ENCODE measurements at regions of chr7 and their contacts with region 1.

Region 1: DNA sequence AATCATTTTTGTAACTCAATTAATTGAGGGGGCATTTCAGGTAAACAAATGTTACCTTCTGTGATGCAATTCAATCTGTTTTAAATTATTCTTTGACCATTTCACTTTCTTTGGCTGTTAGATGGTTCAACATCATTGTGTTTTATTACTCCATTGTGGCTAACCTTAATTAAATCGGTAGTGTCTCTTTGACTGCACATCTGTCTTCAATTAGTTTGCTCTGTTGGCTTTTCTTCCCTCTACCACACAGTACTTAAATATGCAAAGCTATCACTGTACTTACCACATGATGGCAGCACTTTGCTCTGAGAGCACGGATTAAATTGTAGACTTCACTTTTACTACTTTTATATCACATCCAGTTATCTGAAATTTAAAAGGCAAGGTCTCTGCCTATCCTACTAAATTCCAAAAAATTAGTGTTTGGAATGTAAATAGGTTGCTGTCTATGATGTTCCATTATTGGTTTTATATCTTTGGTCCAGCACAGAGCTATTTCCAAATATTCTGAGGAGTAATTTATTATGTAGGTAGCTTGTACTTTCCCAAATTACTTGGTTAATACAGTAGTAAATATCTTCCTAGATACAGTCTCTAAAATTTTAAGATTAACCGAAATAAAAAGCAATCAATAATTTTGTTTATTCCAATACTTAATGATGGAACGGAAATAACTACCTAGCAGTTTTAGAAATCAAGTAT is 352.0 kb downstream of the PCLO start:
- DNase-seq: no peak
- ATAC-seq: peak; percentile 43 to 87 (median 82)
- H3K4me3 ChIP-seq: no peak overlapping the region
- H3K27ac ChIP-seq: no peak overlapping the region
- H3K4me1 ChIP-seq: no peaks in the 10 kb centered on the region
- H3K27me3 ChIP-seq: no peaks in the 10 kb centered on the region
- CTCF ChIP-seq: peak; percentile 40 to 55 (median 48)

Region 2: DNA sequence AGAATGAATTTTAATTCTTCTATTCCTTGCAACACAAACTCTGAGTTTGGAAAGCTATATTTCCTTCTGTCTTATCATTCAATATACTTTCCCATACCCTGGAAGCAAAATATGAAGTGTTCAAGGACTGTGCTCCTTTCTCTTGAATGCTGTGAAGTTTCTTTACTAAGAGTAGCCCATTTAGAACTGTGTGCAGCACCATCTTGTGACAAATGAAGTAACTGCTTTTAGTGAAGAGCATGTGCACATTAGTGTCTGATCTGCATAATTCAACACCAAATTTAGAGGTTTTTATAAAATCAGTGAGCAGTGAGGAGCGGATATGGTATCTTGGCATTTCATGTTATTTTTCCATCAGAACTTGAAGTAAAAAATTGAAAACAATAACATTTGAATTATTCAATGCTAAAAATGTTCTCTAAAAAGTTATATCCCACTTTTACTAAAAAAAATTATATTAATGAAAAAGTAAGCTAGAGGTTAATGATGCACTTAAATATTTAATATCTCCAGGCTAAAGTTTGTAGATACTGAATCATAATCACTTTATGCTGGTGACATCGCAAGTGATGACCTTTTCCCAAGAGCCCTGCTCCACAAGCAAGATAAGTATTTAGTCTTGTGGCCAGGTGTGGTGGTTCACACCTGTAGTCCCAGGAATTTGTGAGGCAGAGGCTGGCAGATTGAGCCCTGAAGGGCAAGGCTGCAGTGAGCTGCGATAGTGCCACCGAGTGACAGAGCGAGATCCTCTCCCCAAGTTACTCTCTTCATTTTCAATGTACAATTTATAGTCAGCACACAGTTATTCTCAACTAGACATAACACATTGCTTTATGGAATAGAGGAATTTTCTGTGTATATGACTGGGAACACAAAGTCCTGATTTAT is 460.7 kb after region 1 on chr7:
- intact Hi-C with region 1: loop called in 1 of 3 experiments (anchors 10 kb)
- DNase-seq: no peak
- ATAC-seq: peak; percentile 77 to 94 (median 90)
- H3K4me3 ChIP-seq: no peak overlapping the region
- H3K27ac ChIP-seq: no peak overlapping the region
- H3K4me1 ChIP-seq: no peaks in the 10 kb centered on the region
- H3K27me3 ChIP-seq: no peaks in the 10 kb centered on the region
- CTCF ChIP-seq: peak in 2 of 4 donors; percentile 17 to 28

Measured in pancreas (tissue), 10 donors.